ENCODE measurements at regions of chr12 and their contacts with region 1.

Region 1: GRCh38 chr12:54032627-54033100 is at the start of gene HOXC5:
- DNase-seq: peak; percentile 41 to 73 (median 62)
- ATAC-seq: peak; percentile 77
- H3K4me3 ChIP-seq: no peak within 1 kb of the TSS
- H3K4me3 Mint-ChIP-seq: peak within 1 kb of the TSS; percentile 52 to 80 (median 67)
- H3K27ac ChIP-seq: no peak within 1 kb of the TSS
- H3K27ac Mint-ChIP-seq: peak within 1 kb of the TSS in 4 of 9 donors; percentile 12 to 74 (median 49)
- H3K4me1 ChIP-seq: peaks cover 7 to 15% of the 10 kb centered on the region in 2 donors
- H3K4me1 Mint-ChIP-seq: peaks cover 9 to 51% (median 31%) of the 10 kb centered on the region in 7 donors
- H3K27me3 ChIP-seq: peaks cover 23 to 62% of the 10 kb centered on the region in 2 donors
- H3K27me3 Mint-ChIP-seq: peaks cover 74 to 93% (median 84%) of the 10 kb centered on the region in 5 donors
- total RNA-seq, gene HOXC5: not detected

Region 2: GRCh38 chr12:53961025-53961761 is 71.5 kb before region 1 on chr12:
- CTCF ChIA-PET with region 1: no interaction called
- POLR2A ChIA-PET with region 1: no interaction called
- intact Hi-C with region 1: loop called in 1 of 2 experiments (anchors 5 kb)
- DNase-seq: no peak
- ATAC-seq: no peak
- H3K4me3 ChIP-seq: no peak overlapping the region
- H3K4me3 Mint-ChIP-seq: no peak overlapping the region
- H3K27ac ChIP-seq: no peak overlapping the region
- H3K27ac Mint-ChIP-seq: no peak overlapping the region
- H3K4me1 ChIP-seq: peaks cover 14 to 16% of the 10 kb centered on the region in 2 donors
- H3K4me1 Mint-ChIP-seq: peaks cover 10 to 51% (median 34%) of the 10 kb centered on the region in 7 donors
- H3K27me3 ChIP-seq: peaks cover 32 to 73% of the 10 kb centered on the region in 2 donors
- H3K27me3 Mint-ChIP-seq: peaks cover 89 to 93% (median 90%) of the 10 kb centered on the region in 5 donors

Region 3: GRCh38 chr12:53984901-53985709 is 47.6 kb before region 1 on chr12 and contains the start of gene HOXC10:
- CTCF ChIA-PET with region 1: no interaction called
- POLR2A ChIA-PET with region 1: interaction called, 3 read pairs
- intact Hi-C with region 1: loop called in 1 of 2 experiments (anchors 5 kb)
- DNase-seq: peak in 4 of 9 donors; percentile 45 to 67 (median 55)
- ATAC-seq: peak; percentile 77
- H3K4me3 ChIP-seq: no peak within 1 kb of the TSS
- H3K4me3 Mint-ChIP-seq: peak within 1 kb of the TSS; percentile 34 to 77 (median 65)
- H3K27ac ChIP-seq: no peak within 1 kb of the TSS
- H3K27ac Mint-ChIP-seq: peak within 1 kb of the TSS in 6 of 9 donors; percentile 34 to 81 (median 65)
- H3K4me1 ChIP-seq: peaks cover 20 to 23% of the 10 kb centered on the region in 2 donors
- H3K4me1 Mint-ChIP-seq: peaks cover 27 to 55% (median 39%) of the 10 kb centered on the region in 7 donors
- H3K27me3 ChIP-seq: peaks cover 60 to 89% of the 10 kb centered on the region in 2 donors
- H3K27me3 Mint-ChIP-seq: peaks cover 91 to 95% (median 92%) of the 10 kb centered on the region in 5 donors
- total RNA-seq, gene HOXC10: not detected

Region 4: DNA sequence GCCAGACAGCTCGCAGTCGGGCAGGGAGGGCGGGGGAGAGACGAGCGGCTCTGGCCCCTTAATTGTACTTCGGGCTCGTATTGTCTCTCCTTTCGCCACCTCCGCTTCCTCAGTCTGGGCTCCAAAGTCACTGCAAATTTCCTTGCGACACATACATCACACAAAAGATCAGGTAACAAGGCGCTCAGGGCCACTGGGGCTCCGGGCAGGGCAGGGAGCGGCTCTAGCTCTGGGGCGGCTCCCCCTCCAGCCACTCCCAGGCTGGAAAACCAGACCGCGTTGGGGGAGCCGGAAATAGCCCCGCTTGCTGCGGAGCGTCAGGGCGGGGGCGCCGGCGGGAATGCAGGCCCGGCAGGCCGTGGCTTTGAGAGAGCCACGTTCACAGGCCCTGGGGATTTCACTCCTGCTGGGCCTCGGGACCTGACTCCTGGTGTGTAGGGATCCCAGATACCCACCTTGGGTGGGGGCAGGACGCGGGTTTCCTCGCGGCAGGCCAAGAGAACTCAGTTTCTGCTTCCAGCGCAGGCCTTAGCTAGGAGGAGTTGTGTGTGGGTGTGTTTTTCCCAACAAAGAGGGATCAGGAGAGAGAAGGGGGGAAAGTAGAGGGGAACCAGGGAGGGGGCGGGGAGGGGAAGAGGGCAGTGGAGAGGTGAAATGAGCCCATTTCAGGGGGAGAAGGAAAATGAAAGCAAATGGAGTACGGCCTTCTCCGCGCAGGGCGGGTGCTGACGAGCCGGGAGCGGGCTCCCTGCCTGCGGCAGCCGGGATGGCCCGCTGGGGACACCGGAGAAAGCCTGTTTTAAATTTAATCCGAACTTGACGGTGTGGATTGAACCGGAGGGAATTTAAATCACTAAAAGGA is 37.1 kb before region 1 on chr12:
- CTCF ChIA-PET with region 1: no interaction called
- POLR2A ChIA-PET with region 1: no interaction called
- intact Hi-C with region 1: loop called in 1 of 2 experiments (anchors 5 kb)
- DNase-seq: no peak
- ATAC-seq: peak; percentile 31
- H3K4me3 ChIP-seq: peak overlapping the region; percentile 62
- H3K4me3 Mint-ChIP-seq: peak overlapping the region; percentile 77 to 88 (median 85)
- H3K27ac ChIP-seq: no peak overlapping the region
- H3K27ac Mint-ChIP-seq: peak overlapping the region in 3 of 9 donors; percentile 24 to 73 (median 58)
- H3K4me1 ChIP-seq: peaks cover 24 to 28% of the 10 kb centered on the region in 2 donors
- H3K4me1 Mint-ChIP-seq: peaks cover 22 to 63% (median 37%) of the 10 kb centered on the region in 7 donors
- H3K27me3 ChIP-seq: peaks cover 49 to 91% of the 10 kb centered on the region in 2 donors
- H3K27me3 Mint-ChIP-seq: peaks cover 86 to 98% (median 88%) of the 10 kb centered on the region in 5 donors

Region 5: GRCh38 chr12:54017878-54018467 is 14.7 kb before region 1 on chr12:
- CTCF ChIA-PET with region 1: interaction called, 12 read pairs
- POLR2A ChIA-PET with region 1: no interaction called
- intact Hi-C with region 1: loop called in 1 of 2 experiments (anchors 1 kb)
- DNase-seq: peak; percentile 50 to 73 (median 67)
- ATAC-seq: peak; percentile 86
- H3K4me3 ChIP-seq: peak overlapping the region; percentile 58
- H3K4me3 Mint-ChIP-seq: peak overlapping the region; percentile 69 to 89 (median 84)
- H3K27ac ChIP-seq: no peak overlapping the region
- H3K27ac Mint-ChIP-seq: peak overlapping the region in 2 of 9 donors; percentile 10 to 42
- H3K4me1 ChIP-seq: peaks cover 7 to 15% of the 10 kb centered on the region in 2 donors
- H3K4me1 Mint-ChIP-seq: peaks cover 6 to 33% (median 18%) of the 10 kb centered on the region in 7 donors
- H3K27me3 ChIP-seq: peaks cover 16 to 58% of the 10 kb centered on the region in 2 donors
- H3K27me3 Mint-ChIP-seq: peaks cover 68 to 92% (median 78%) of the 10 kb centered on the region in 5 donors

Region 6: DNA sequence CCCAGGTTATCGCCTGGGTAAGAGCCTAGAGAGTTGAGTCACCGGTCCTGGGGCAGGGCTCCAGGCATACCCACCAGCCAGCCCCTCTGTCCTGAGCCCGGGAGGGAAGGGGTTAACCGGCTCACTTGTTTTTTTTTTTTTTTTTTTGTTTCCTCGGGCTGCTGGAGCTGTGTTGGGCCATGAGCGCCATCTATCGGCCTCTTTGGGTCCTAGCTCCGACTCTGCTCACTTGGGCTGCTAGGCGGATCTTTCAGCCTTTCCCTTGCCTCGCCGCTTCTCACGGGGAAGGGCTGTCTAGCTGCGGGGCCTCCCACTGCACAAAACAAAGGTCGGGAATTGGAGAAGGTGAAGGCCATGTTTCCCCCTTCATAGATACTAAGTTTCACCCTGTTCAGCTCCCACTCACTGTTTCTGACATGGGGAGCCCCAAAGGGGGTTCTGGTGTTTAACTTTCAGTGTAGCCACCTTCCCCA is 158.9 kb after region 1 on chr12:
- CTCF ChIA-PET with region 1: interaction called, 17 read pairs
- POLR2A ChIA-PET with region 1: interaction called, 6 read pairs
- intact Hi-C with region 1: loop called (anchors 1 kb)
- DNase-seq: peak; percentile 58 to 85 (median 76)
- ATAC-seq: peak; percentile 82
- H3K4me3 ChIP-seq: no peak overlapping the region
- H3K4me3 Mint-ChIP-seq: peak overlapping the region in 3 of 10 donors; percentile 10 to 44 (median 32)
- H3K27ac ChIP-seq: no peak overlapping the region
- H3K27ac Mint-ChIP-seq: peak overlapping the region in 3 of 9 donors; percentile 3 to 48 (median 17)
- H3K4me1 ChIP-seq: peaks cover 8 to 9% of the 10 kb centered on the region in 2 donors
- H3K4me1 Mint-ChIP-seq: peaks cover 17 to 31% (median 27%) of the 10 kb centered on the region in 7 donors
- H3K27me3 ChIP-seq: peaks cover 0 to 6% of the 10 kb centered on the region in 2 donors
- H3K27me3 Mint-ChIP-seq: peaks cover 39 to 61% (median 46%) of the 10 kb centered on the region in 5 donors

Region 7: DNA sequence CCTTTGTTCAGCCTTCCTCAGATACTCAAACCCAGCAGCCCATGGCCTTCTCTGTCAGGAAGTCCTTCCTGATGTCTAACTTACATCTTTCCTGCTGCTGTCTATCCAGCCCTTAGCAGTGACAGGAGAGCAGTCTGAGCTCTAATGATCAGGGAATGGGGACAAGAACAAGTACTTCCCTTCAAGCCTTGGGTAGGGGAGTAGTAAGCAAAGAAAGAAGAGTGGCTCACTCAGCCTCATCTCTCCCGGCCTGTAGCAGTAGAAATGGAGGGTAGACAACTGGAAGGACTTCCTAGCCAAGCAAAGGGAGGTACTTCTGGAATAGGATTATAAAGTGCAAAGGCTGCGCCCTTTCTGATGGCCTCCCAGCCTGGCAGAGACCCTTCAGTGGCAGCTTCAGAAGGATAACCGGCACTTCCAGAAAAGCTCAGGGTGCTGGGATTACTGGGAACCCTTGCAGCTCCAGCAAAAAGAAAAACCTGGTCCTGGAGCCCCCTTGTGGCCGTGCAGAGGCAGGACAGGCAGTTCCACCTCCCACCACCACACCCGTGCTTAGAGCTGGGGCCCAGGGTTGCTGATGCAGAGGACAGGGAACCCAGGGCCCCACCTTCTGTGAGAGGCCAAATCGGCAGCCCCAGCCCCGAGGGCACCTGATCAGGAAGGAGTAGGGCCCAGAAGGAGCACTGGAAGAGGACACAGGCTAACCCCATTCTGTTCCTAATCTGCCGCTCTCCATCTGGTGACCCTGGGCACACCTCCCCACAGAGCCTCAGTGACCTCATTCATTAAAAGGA is 168.5 kb after region 1 on chr12:
- CTCF ChIA-PET with region 1: interaction called, 12 read pairs
- POLR2A ChIA-PET with region 1: no interaction called
- intact Hi-C with region 1: loop called (anchors 1 to 2 kb)
- DNase-seq: peak; percentile 45 to 70 (median 59)
- ATAC-seq: peak; percentile 94
- H3K4me3 ChIP-seq: no peak overlapping the region
- H3K4me3 Mint-ChIP-seq: no peak overlapping the region
- H3K27ac ChIP-seq: no peak overlapping the region
- H3K27ac Mint-ChIP-seq: no peak overlapping the region
- H3K4me1 ChIP-seq: no peaks in the 10 kb centered on the region
- H3K4me1 Mint-ChIP-seq: no peaks in the 10 kb centered on the region
- H3K27me3 ChIP-seq: peaks cover 6 to 16% of the 10 kb centered on the region in 2 donors
- H3K27me3 Mint-ChIP-seq: peaks cover 70 to 81% (median 73%) of the 10 kb centered on the region in 5 donors